ENCODE measurements at regions of chr5 and their contacts with region 1.

Region 1: GRCh38 chr5:178606269-178606668 is 16.1 kb upstream of the COL23A1 start:
- DNase-seq: no peak
- H3K4me3 Mint-ChIP-seq: no peak overlapping the region
- H3K27ac Mint-ChIP-seq: no peak overlapping the region
- H3K4me1 Mint-ChIP-seq: no peaks in the 10 kb centered on the region
- H3K27me3 Mint-ChIP-seq: no peaks in the 10 kb centered on the region
- CTCF ChIP-seq: no peak

Region 2: DNA sequence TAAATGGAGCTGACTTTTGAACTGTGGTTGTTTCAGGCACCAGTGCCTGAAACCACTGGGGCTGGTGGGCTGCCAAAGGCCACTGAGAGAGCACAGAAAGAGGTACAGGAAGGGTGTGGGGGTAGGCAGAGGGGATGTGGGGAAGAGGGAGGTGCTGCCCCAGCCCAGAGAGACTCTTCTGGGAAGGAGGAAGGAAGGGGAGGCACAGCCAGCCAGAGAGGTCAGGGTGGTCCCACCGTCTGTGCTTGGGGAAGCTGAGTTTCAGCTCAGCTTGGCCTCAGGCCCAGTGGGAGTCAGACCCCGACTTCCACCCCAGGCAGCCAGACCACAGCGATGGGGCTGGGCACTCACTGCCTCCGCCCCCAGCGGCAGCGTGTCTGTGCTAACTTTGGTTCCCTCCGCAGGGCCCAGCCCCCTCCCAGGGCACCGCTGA is 365.0 kb before region 1 on chr5:
- CTCF ChIA-PET with region 1: no interaction called
- intact Hi-C with region 1: no loop called
- DNase-seq: no peak
- H3K4me3 Mint-ChIP-seq: no peak overlapping the region
- H3K27ac Mint-ChIP-seq: no peak overlapping the region
- H3K4me1 Mint-ChIP-seq: no peaks in the 10 kb centered on the region
- H3K27me3 Mint-ChIP-seq: peaks cover 12% of the 10 kb centered on the region
- CTCF ChIP-seq: no peak

Region 3: DNA sequence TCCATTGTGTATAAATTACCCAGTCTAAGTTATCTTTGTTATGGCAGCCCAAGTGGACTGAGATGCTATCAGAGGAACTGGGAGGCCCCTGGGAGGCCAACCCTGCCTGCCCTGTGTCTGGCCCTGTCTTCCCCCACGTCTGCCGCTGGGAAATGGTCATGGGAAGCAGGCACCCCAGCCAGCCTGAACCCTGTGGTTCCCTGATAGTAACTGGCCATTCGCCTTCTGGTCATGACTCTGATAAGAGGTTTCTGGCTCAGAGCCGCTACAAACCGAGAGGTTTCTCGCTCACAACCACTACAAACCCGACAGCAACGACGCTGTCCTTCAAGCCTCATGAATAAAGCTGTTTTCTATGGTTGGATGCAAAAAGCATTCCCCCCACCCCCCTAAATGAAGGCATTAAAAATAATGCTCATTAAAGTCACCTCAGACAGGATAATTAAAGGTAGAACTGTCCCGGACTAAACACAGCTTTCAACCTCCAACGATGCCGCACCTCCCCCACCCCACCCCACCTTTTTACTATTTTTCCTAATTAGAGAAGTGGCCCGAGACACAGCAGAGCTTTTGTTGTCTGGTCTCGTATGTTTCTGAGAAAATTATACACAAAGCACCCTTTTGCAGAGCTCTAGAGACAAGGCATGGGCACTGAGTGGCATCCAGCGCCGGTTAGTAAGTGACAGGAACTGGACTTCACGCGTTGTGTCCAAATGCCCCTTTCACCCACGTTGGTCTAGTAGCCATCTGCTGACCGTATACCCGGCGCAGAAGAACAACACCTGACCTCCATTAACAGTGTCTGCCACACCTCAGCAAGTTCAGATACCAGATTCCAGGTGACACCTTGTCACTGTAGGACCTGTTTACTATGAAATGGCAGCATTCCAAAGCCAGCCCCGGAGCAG is 156.9 kb before region 1 on chr5:
- CTCF ChIA-PET with region 1: no interaction called
- intact Hi-C with region 1: no loop called
- DNase-seq: no peak
- H3K4me3 Mint-ChIP-seq: no peak overlapping the region
- H3K27ac Mint-ChIP-seq: no peak overlapping the region
- H3K4me1 Mint-ChIP-seq: no peaks in the 10 kb centered on the region
- H3K27me3 Mint-ChIP-seq: peaks cover 11% of the 10 kb centered on the region
- CTCF ChIP-seq: no peak

Region 4: DNA sequence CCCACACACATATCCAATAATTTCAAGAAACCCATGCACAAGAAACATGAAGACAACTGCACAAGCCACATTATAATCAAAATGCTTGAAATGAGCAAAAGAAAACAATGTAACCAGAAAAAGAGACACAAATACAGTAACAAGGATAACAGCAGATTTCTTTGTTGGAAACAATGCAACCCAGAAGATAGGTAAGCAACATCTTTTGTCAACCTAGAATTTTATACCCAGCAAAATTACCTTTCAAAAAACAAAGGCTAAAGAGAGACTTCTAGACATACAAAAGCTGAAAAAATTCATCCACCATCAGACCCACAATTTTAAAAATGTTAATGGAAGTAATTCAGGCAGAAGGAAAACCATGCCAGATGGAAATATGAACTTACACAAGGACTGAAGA is 11.1 kb before region 1 on chr5:
- CTCF ChIA-PET with region 1: no interaction called
- intact Hi-C with region 1: no loop called
- DNase-seq: no peak
- H3K4me3 Mint-ChIP-seq: no peak overlapping the region
- H3K27ac Mint-ChIP-seq: no peak overlapping the region
- H3K4me1 Mint-ChIP-seq: no peaks in the 10 kb centered on the region
- H3K27me3 Mint-ChIP-seq: no peaks in the 10 kb centered on the region
- CTCF ChIP-seq: no peak

Region 5: GRCh38 chr5:178625679-178626483 is 19.6 kb after region 1 on chr5:
- CTCF ChIA-PET with region 1: interaction called, 3 read pairs
- intact Hi-C with region 1: loop called (anchors 2 kb)
- DNase-seq: no peak
- H3K4me3 Mint-ChIP-seq: peak overlapping the region; percentile 100
- H3K27ac Mint-ChIP-seq: peak overlapping the region; percentile 99
- H3K4me1 Mint-ChIP-seq: peaks cover 6% of the 10 kb centered on the region
- H3K27me3 Mint-ChIP-seq: no peaks in the 10 kb centered on the region
- CTCF ChIP-seq: no peak

Region 6: DNA sequence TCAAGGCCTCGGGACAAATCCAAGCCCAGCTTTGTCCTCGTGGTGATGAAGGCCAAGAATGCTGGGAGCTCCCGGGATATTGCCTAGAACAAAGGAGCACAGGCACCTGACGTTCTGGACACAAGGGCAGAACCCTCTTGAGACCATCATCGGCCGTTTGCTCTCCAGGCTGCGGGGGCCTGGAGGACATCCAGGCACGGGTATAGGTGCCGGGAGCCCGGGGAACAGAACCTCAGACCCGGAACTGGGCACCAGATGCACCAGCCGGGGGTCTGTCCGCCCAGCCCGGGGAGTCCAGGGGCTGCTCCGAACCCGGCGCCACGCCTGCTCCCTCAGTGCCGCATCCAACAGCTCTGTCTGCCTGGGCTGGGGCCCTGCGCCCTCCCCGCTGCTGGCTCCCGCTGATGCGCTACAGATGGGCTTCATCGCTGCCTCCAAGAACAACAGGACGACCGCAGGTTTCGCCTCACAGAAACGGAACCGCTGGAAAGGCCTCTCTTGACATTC is 651.0 kb after region 1 on chr5:
- CTCF ChIA-PET with region 1: no interaction called
- intact Hi-C with region 1: no loop called
- DNase-seq: no peak
- H3K4me3 Mint-ChIP-seq: no peak overlapping the region
- H3K27ac Mint-ChIP-seq: no peak overlapping the region
- H3K4me1 Mint-ChIP-seq: no peaks in the 10 kb centered on the region
- H3K27me3 Mint-ChIP-seq: no peaks in the 10 kb centered on the region
- CTCF ChIP-seq: no peak

Measured in Calu3 (cell line).